HEK293 (cell line): ENCODE measurements at regions of chr17 and their contacts with region 1.

Region 1: DNA sequence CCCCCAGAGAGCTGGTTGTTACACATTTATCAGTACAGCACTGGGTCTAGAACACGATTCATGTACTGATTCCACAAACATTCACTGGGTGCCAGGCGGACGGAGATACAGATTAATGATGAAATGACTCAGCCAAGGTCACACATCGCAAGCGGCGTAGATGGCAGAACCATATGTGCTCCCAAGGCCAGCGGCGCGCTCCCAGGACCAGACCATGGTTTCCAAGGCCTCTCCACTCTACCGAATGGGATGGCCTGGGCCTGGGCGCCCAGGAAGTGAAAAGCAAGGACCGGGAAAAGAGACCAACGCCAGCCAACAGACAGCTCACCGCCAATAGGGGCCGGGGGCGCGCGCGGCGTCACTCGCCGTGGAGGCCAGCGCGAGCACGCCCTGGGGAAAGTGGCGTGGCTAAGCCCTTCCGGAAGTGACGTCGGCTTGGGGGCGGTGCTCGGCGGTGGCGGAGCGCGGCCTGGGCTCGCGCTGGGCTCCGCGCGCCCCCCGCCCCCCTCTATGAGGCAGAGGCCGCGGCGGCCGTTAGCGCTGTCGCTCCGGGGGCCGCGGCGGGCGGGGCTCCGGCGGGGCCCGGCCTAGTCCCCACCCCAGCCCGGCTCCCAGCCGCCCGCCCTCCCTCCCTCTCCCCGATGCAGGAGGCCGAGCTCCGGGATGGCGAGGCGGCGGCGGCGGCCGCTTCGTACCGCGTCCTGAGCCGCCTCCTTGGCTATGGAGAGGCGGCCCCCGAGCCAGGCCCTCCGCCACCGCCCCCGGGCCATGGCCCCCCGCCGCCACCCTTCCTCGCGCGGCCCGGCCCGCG is at the start of gene SOCS7:
- H3K4me3 ChIP-seq: peak within 1 kb of the TSS; percentile 75
- H3K27ac ChIP-seq: peak within 1 kb of the TSS; percentile 83
- H3K4me1 ChIP-seq: peaks cover 11% of the 10 kb centered on the region
- CTCF ChIP-seq: 0 out of 2 replicates have a peak, but pooled peaks have one; percentile 21

Region 2: DNA sequence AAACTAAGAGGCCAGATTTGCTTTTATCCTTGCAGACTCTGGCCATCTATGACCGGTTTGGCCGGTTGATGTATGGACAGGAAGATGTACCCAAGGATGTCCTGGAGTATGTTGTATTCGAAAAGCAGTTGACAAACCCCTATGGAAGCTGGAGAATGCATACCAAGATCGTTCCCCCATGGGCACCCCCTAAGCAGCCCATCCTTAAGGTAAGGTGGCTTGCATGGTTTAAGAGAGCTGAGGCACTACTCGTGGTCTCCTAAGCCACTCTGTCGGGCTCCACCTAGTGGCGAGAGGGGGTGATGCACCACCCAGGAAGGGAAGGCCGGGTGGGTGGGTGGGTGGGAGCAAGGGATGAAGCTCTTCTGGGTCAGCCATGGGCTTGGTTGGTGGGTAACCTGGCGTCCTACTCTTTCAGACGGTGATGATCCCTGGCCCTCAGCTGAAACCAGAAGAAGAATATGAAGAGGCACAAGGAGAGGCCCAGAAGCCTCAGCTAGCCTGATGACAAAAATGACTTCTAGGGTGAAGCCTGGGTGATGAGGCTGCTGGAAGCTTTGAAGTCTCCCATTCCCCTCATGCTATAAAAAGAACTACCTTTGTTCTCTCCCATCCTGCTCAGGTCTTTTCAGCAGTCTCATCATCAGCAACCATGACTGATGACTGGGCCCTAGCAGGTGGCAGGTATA is 29.4 kb before region 1 on chr17:
- CTCF ChIA-PET with region 1: interaction called, 51 read pairs
- POLR2A ChIA-PET with region 1: interaction called, 4 read pairs
- H3K4me3 ChIP-seq: no peak overlapping the region
- H3K27ac ChIP-seq: no peak overlapping the region
- H3K4me1 ChIP-seq: peaks cover 4% of the 10 kb centered on the region
- CTCF ChIP-seq: no peak

Region 3: GRCh38 chr17:38364741-38365140 is 13.1 kb after region 1 on chr17:
- CTCF ChIA-PET with region 1: interaction called, 62 read pairs
- POLR2A ChIA-PET with region 1: interaction called, 6 read pairs
- H3K4me3 ChIP-seq: no peak overlapping the region
- H3K27ac ChIP-seq: no peak overlapping the region
- H3K4me1 ChIP-seq: no peaks in the 10 kb centered on the region
- CTCF ChIP-seq: no peak

Region 4: GRCh38 chr17:38403491-38403890 is 51.9 kb after region 1 on chr17:
- CTCF ChIA-PET with region 1: interaction called, 41 read pairs
- POLR2A ChIA-PET with region 1: interaction called, 6 read pairs
- H3K4me3 ChIP-seq: no peak overlapping the region
- H3K27ac ChIP-seq: no peak overlapping the region
- H3K4me1 ChIP-seq: peaks cover 7% of the 10 kb centered on the region; the same call in 1 of the 2 replicates
- CTCF ChIP-seq: no peak

Region 5: DNA sequence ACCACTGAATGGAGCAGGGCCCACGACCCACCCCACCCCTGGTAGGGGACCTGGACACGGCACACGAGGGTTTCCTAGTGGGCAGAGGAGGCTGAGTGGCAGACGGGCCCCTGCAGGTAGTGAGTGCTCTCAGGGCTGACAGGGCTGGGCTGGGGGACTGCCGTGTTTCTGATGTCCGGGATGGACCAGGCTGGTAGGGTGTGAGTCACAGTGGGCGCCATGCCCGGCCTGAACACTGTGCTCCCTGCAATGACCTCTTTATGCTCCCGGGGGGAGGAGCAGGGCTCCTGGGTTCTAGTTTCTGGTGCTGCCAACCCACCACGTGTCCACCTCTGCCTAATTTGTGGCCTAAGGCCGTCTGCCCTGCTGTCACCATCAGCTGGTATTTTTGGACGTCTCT is 102.9 kb after region 1 on chr17:
- CTCF ChIA-PET with region 1: interaction called, 12 read pairs
- POLR2A ChIA-PET with region 1: no interaction called
- H3K4me3 ChIP-seq: no peak overlapping the region
- H3K27ac ChIP-seq: no peak overlapping the region
- H3K4me1 ChIP-seq: peaks cover 9% of the 10 kb centered on the region
- CTCF ChIP-seq: no peak

Region 6: DNA sequence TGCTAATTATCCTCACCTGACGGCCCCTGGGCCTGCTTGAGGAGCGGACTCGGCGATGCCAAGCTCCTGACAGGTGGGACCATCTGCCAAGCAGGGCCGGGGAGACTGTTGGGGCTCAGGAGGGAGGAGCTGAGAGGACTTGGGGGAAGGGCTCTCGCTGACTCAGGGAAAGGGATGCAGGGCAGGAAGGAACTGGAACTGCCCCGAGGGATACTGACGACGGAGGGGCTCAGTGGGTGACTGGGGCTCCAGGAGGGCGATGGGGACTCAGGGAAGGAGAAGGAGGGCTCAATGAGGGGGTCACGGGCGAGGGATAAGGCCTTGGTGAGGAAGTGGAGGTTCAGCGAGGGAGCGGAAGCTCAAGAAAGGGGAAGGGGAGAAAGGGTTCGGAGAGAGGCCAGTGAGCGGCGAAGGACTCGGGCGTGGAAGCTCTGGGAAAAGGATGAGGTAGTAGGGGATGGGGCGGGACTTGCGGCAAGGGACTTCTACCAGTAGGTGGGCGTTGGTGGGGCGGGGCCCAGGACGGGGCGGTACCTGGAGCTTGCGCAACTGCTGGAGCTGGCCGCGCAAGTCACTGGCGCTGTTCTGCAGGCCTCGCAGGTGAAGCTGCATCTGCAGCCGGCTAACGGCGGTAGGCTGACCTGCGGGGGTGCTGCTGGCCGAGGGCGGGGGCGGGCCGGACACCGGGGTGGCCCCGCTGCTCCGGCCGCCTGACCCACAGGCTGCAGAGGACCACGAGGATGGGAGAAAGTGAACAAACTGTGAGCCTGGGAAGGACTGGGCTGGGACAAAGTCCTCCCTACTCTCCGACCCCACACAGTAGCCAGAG is 207.6 kb after region 1 on chr17:
- CTCF ChIA-PET with region 1: no interaction called
- POLR2A ChIA-PET with region 1: no interaction called
- H3K4me3 ChIP-seq: peak overlapping the region; percentile 26
- H3K27ac ChIP-seq: no peak overlapping the region; the same call in 1 of the 2 replicates
- H3K4me1 ChIP-seq: peaks cover 15% of the 10 kb centered on the region
- CTCF ChIP-seq: peak; percentile 93